CD8-positive, alpha-beta T cell (primary cell): ENCODE measurements at regions of chr5 and their contacts with region 1.

Region 1: GRCh38 chr5:62412537-62413329 is at the start of gene IPO11:
- DNase-seq: peak; percentile 97 to 100 (median 99)
- ATAC-seq: peak; percentile 96
- H3K4me3 ChIP-seq: peak within 1 kb of the TSS; percentile 78 to 98
- H3K4me3 Mint-ChIP-seq: peak within 1 kb of the TSS; percentile 88
- H3K27ac ChIP-seq: peak within 1 kb of the TSS; percentile 80 to 84
- H3K27ac Mint-ChIP-seq: peak within 1 kb of the TSS; percentile 88
- H3K4me1 ChIP-seq: peaks cover 14% of the 10 kb centered on the region
- H3K4me1 Mint-ChIP-seq: peaks cover 30% of the 10 kb centered on the region
- H3K27me3 ChIP-seq: no peaks in the 10 kb centered on the region
- H3K27me3 Mint-ChIP-seq: no peaks in the 10 kb centered on the region
- CTCF ChIP-seq: no peak
- total RNA-seq, gene IPO11: 17.0 to 17.2 TPM

Region 2: GRCh38 chr5:62082370-62082801 is 330.3 kb before region 1 on chr5:
- CTCF ChIA-PET with region 1: no interaction called
- POLR2A ChIA-PET with region 1: no interaction called
- intact Hi-C with region 1: no loop called
- DNase-seq: no peak
- ATAC-seq: no peak
- H3K4me3 ChIP-seq: no peak overlapping the region
- H3K4me3 Mint-ChIP-seq: no peak overlapping the region
- H3K27ac ChIP-seq: no peak overlapping the region
- H3K27ac Mint-ChIP-seq: no peak overlapping the region
- H3K4me1 ChIP-seq: no peaks in the 10 kb centered on the region
- H3K4me1 Mint-ChIP-seq: no peaks in the 10 kb centered on the region
- H3K27me3 ChIP-seq: no peaks in the 10 kb centered on the region
- H3K27me3 Mint-ChIP-seq: no peaks in the 10 kb centered on the region
- CTCF ChIP-seq: no peak

Region 3: DNA sequence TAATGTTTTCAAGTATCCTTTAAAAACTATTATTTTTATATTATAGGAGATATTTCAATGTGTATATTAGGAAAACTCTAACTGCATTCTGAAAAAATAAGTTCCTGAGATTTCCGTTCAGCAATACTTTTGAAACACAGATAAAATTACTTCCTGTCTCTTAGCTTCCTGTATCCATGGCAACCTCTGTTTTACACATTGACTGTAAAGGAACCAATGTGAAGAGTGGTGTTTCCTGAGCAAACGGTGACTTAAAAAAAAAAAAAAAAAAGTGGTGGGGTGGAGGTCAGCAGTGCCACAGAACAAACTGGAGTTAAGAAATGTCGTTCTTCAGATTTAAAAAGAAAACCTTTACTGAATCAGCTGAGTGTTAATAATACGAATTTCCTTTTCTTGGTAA is 165.8 kb after region 1 on chr5 and contains the start of gene LRRC70:
- CTCF ChIA-PET with region 1: no interaction called
- POLR2A ChIA-PET with region 1: no interaction called
- intact Hi-C with region 1: loop called in 1 of 2 experiments (anchors 2 kb)
- DNase-seq: peak in 3 of 9 experiments; percentile 14 to 91 (median 81)
- ATAC-seq: peak; percentile 94
- H3K4me3 ChIP-seq: no peak within 1 kb of the TSS
- H3K4me3 Mint-ChIP-seq: peak within 1 kb of the TSS; percentile 74
- H3K27ac ChIP-seq: peak within 1 kb of the TSS; percentile 12 to 62
- H3K27ac Mint-ChIP-seq: peak within 1 kb of the TSS; percentile 83
- H3K4me1 ChIP-seq: peaks cover 3% of the 10 kb centered on the region
- H3K4me1 Mint-ChIP-seq: peaks cover 32% of the 10 kb centered on the region
- H3K27me3 ChIP-seq: no peaks in the 10 kb centered on the region
- H3K27me3 Mint-ChIP-seq: no peaks in the 10 kb centered on the region
- CTCF ChIP-seq: no peak
- total RNA-seq, gene LRRC70: 3.4 to 3.5 TPM